ENCODE measurements at regions of chr17 and their contacts with region 1.

Region 1: GRCh38 chr17:75845049-75845860 is 1.1 kb upstream of the UNC13D start:
- DNase-seq: peak; percentile 83
- H3K4me3 Mint-ChIP-seq: peak overlapping the region; percentile 57
- H3K27ac Mint-ChIP-seq: peak overlapping the region; percentile 95
- H3K4me1 Mint-ChIP-seq: peaks cover 21% of the 10 kb centered on the region
- H3K27me3 Mint-ChIP-seq: no peaks in the 10 kb centered on the region

Region 2: GRCh38 chr17:75679706-75680442 is 165.4 kb before region 1 on chr17:
- CTCF ChIA-PET with region 1: no interaction called
- POLR2A ChIA-PET with region 1: no interaction called
- intact Hi-C with region 1: no loop called
- DNase-seq: no peak
- H3K4me3 Mint-ChIP-seq: no peak overlapping the region
- H3K27ac Mint-ChIP-seq: no peak overlapping the region
- H3K4me1 Mint-ChIP-seq: peaks cover 20% of the 10 kb centered on the region
- H3K27me3 Mint-ChIP-seq: no peaks in the 10 kb centered on the region

Region 3: DNA sequence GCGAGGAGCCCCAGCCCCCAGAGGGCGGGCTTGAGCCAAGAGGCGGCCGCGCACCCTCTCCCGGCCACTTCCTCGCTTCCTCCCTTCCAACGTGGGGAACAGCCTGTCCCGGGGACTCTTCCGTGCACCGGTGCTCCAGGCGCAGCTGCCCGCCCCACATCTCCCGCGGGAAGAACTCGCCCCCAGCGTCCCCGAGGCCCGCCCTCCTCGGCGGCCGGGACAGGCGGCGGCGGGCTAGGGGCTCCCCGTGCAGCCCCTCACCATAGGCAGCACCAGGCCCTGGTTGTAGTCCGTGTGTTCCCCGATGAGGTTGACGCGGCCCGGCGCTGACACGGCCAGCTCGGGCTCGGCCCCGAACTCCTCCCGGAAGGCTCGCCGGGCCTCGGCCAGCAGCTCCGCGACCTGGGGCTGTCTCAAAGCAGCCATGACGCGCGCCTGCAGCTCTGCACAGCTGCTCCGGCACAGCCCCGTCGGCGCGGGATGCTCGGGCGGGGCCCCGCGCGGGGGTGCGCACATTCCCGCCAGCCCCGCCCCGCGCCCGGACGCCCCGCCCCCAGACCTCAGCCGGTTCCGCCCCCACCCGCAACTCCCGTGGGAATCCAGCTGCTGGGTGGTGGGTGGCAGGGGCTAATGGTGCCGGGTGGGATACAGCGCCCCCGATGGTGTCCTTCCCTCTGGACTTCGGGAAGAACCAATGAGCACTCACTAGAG is 80.4 kb before region 1 on chr17 and contains the start of gene GALK1:
- CTCF ChIA-PET with region 1: interaction called, 32 read pairs
- POLR2A ChIA-PET with region 1: no interaction called
- intact Hi-C with region 1: no loop called
- DNase-seq: peak; percentile 83
- H3K4me3 Mint-ChIP-seq: peak within 1 kb of the TSS; percentile 79
- H3K27ac Mint-ChIP-seq: peak within 1 kb of the TSS; percentile 71
- H3K4me1 Mint-ChIP-seq: peaks cover 11% of the 10 kb centered on the region
- H3K27me3 Mint-ChIP-seq: no peaks in the 10 kb centered on the region
- total RNA-seq, gene GALK1: 69.3 to 69.7 TPM

Region 4: GRCh38 chr17:75827252-75828115 is 17.8 kb before region 1 on chr17:
- CTCF ChIA-PET with region 1: interaction called, 15 read pairs
- POLR2A ChIA-PET with region 1: interaction called, 3 read pairs
- intact Hi-C with region 1: loop called (anchors 1 kb)
- DNase-seq: peak; percentile 79
- H3K4me3 Mint-ChIP-seq: peak overlapping the region; percentile 46
- H3K27ac Mint-ChIP-seq: peak overlapping the region; percentile 87
- H3K4me1 Mint-ChIP-seq: peaks cover 15% of the 10 kb centered on the region
- H3K27me3 Mint-ChIP-seq: no peaks in the 10 kb centered on the region